A673 (cell line): ENCODE measurements at regions of chr1 and their contacts with region 1.

Region 1: DNA sequence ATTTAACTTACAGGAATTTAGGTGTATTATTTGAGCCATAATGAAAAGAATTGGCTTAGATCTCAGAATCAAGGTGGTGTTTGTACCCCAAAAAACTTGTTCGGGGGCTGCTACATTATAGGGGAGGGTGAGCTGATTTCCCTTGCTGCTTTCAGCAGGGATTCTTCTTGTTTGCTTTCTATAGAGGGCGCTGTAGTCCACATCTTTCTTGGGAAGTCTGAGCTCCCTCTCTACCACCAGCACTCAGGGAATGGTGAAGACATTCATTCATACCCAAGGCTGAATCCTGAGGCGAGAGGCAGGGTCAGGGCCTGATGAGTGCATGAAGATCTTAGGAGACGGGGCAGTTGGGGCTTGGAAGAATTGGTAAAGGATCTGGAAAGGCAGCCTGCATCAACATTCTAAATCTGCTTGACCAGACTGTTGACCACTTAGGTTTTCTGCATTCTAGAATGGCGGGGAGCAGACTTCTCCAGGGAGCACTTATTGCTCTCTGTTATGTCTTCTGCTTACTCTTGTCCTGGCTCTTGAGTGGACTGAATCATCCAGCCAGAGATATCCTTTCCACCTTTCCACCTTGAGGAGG is 18.9 kb downstream of the SPATA46 start:
- DNase-seq: peak; percentile 86
- H3K4me3 ChIP-seq: no peak overlapping the region
- H3K27ac ChIP-seq: peak overlapping the region; percentile 56
- H3K4me1 ChIP-seq: peaks cover 31% of the 10 kb centered on the region
- H3K27me3 ChIP-seq: no peaks in the 10 kb centered on the region
- CTCF ChIP-seq: peak; percentile 91

Region 2: GRCh38 chr1:162368451-162368850 is 10.7 kb after region 1 on chr1:
- CTCF ChIA-PET with region 1: no interaction called
- POLR2A ChIA-PET with region 1: interaction called, 18 read pairs
- intact Hi-C with region 1: no loop called
- DNase-seq: no peak
- H3K4me3 ChIP-seq: no peak overlapping the region
- H3K27ac ChIP-seq: no peak overlapping the region
- H3K4me1 ChIP-seq: no peaks in the 10 kb centered on the region
- H3K27me3 ChIP-seq: no peaks in the 10 kb centered on the region
- CTCF ChIP-seq: no peak